ENCODE measurements at regions of chr3 and their contacts with region 1.

Region 1: DNA sequence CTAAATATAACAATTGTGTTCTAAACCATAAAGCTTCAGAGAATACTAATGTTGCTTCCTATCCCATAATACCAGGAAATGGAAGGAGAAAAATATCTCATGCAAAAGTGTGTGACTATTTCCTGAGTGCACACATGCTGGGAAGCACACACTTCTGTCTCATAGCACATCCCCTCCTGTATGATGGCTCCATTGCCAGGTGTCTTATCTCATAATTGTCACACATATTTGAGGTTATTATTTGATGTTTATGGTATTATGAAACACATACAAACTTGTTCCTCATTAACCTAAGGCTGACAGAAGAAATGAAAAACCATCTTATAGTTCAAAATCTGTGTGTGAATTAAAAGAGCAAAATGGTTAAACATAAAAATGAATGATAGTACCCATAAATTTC is 65.4 kb downstream of the SERP1 start:
- DNase-seq: no peak
- ATAC-seq: no peak

Region 2: DNA sequence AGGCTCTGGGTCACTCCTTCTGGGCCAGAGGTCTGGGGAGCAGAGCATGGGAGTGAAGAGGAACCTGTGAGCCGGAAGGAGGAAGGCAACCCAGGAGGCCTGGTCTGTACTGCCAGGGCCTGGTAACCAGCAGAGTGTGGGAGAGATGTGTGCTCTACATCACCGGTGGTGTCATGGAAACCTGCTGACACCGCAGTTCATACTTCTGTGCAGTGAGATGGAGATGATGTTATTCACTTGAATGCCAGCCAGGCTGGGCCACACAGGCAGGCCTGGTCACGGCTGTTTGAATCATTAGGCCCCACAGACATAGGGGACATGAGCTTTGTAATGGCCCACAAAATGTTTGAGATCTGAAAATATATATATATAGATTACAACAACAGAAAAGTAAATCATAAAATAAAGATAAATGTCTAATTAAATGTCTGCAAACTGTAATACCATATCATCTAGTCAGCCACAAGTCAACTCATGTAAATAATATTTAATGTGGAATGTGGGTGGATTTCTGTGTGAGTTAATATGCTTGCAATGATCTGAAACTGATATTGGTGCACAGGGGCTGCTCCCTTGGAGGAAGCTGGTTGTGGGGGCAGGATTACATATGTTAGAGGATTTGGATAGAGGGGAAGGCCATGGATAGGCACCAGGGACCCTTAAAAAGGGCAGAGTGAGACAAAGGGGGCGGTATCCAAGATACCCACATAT is 401.7 kb before region 1 on chr3:
- intact Hi-C with region 1: no loop called
- DNase-seq: no peak
- ATAC-seq: no peak

Region 3: GRCh38 chr3:150371741-150372254 is 109.1 kb before region 1 on chr3:
- intact Hi-C with region 1: no loop called
- DNase-seq: no peak
- ATAC-seq: peak; percentile 97

Region 4: GRCh38 chr3:150409512-150410310 is 71.2 kb before region 1 on chr3:
- intact Hi-C with region 1: loop called (anchors 10 kb)
- DNase-seq: peak; percentile 87
- ATAC-seq: peak; percentile 63